ENCODE measurements at regions of chr2 and their contacts with region 1.

Region 1: GRCh38 chr2:210002158-210003157 is at the start of gene RPE:
- DNase-seq: peak; percentile 95
- H3K4me3 Mint-ChIP-seq: peak within 1 kb of the TSS; percentile 95
- H3K27ac Mint-ChIP-seq: peak within 1 kb of the TSS; percentile 87
- H3K4me1 Mint-ChIP-seq: peaks cover 43% of the 10 kb centered on the region
- H3K27me3 Mint-ChIP-seq: no peaks in the 10 kb centered on the region
- total RNA-seq, gene RPE: 57.2 and 57.8 TPM in 2 replicates

Region 2: GRCh38 chr2:210171309-210172203 is 169.1 kb after region 1 on chr2 and contains the start of gene KANSL1L:
- intact Hi-C with region 1: loop called (anchors 1 kb)
- DNase-seq: peak; percentile 95
- H3K4me3 Mint-ChIP-seq: peak within 1 kb of the TSS; percentile 96
- H3K27ac Mint-ChIP-seq: peak within 1 kb of the TSS; percentile 99
- H3K4me1 Mint-ChIP-seq: peaks cover 26% of the 10 kb centered on the region
- H3K27me3 Mint-ChIP-seq: peaks cover 21% of the 10 kb centered on the region
- total RNA-seq, gene KANSL1L: 4.9 and 6.5 TPM in 2 replicates

Measured in activated T-helper 2 cell treated with anti-CD3 and anti-CD28 coated beads, Interferon-gamma antibody, Interleukin-2, Interleukin-4, amounts not matched to agents 10 μg/mL and 5 μg/mL and 100 μg/mL, durations not matched to agents 14 hours and 24 hours and 36 hours (primary cell).